Common myeloid progenitor, CD34-positive (primary cell): ENCODE measurements at regions of chr6 and their contacts with region 1.

Region 1: DNA sequence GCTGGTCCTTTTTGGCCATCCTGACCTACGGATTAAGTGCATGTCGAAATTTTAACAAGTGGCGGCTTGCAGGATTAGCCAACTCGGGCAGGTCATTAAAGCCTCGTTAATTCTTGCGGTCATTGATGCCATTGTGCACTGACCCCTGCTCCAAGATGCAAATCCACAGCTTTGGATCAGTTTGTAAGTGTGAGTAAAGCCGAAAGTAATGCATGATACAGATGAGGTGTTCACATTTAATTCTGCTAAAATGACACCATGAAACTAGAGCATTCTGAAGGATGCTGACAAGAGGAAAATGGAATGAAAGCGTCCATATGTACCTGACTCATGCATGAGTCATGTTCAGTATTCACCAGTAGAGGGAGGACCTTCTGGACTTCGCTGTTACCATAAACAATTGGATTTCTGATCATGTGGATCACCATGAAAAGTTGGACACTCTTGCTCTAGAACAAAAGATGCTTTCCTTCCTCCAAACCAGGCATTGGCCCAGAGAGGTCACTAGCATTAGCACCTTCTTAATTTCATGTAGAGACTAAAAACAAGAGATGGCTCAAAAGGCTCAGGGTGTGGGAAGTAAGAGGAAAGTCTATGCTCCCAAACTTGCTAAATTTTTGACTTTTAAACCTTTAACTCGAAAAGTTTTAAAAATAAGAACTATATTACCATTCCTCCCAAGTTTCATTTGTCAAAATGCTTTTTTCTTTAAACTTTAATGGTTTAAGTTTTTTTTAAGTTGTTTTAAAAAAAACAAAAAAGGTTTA is 48.0 kb downstream of the MUC22 start:
- DNase-seq: peak; percentile 43 to 64 (median 62)
- H3K4me3 ChIP-seq: no peak overlapping the region
- H3K27ac ChIP-seq: no peak overlapping the region
- H3K4me1 ChIP-seq: peaks cover 0 to 12% (median 8%) of the 10 kb centered on the region in 4 experiments
- H3K27me3 ChIP-seq: peaks cover 0 to 4% (median 0%) of the 10 kb centered on the region in 5 experiments

Region 2: DNA sequence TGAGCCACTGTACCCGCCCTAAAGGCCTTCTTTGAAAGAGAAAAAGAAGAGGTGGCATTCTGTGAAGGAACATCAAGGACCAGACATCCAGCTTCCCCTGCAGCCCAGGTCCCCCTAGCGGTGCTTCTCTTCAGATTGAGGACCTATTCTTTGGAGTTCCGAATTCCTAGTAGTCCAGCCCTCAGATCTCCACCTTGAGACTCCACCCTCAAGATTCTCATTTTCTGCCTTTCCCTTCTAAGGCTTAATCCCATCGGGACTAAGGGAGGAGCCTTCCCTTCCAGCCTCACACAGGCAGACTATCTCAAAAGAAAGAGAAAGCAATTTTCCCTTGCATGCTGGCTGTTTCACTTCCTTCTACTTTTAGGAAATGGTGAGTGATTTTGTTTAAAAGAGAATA is 15.5 kb before region 1 on chr6:
- CTCF ChIA-PET with region 1: interaction called, 10 read pairs
- POLR2A ChIA-PET with region 1: interaction called, 3 read pairs
- DNase-seq: peak; percentile 45 to 53 (median 50)
- H3K4me3 ChIP-seq: peak overlapping the region in 3 of 7 experiments; percentile 24 to 57 (median 32)
- H3K27ac ChIP-seq: no peak overlapping the region
- H3K4me1 ChIP-seq: no peaks in the 10 kb centered on the region
- H3K27me3 ChIP-seq: peaks cover 0 to 14% (median 3%) of the 10 kb centered on the region in 5 experiments

Region 3: GRCh38 chr6:31336896-31337496 is 278.7 kb after region 1 on chr6:
- CTCF ChIA-PET with region 1: no interaction called
- POLR2A ChIA-PET with region 1: no interaction called
- DNase-seq: peak in 2 of 3 donors; percentile 39 to 41
- H3K4me3 ChIP-seq: no peak overlapping the region
- H3K27ac ChIP-seq: no peak overlapping the region
- H3K4me1 ChIP-seq: peaks cover 0 to 6% (median 2%) of the 10 kb centered on the region in 4 experiments
- H3K27me3 ChIP-seq: no peaks in the 10 kb centered on the region